ENCODE measurements at regions of chr6 and their contacts with region 1.

Region 1: GRCh38 chr6:150417899-150418826 is 49.4 kb downstream of the IYD start:
- DNase-seq: peak; percentile 80
- ATAC-seq: peak; percentile 89
- H3K4me3 ChIP-seq: peak overlapping the region; percentile 16 to 30; a peak in 3 of 4 replicates
- H3K27ac ChIP-seq: peak overlapping the region; percentile 44; the same call in 1 of the 2 replicates
- H3K4me1 ChIP-seq: peaks cover 8% of the 10 kb centered on the region; the same call in 1 of the 2 replicates
- H3K27me3 ChIP-seq: no peaks in the 10 kb centered on the region
- CTCF ChIP-seq: peak; percentile 76

Region 2: GRCh38 chr6:149963462-149964307 is 454.5 kb before region 1 on chr6 and contains the start of gene ULBP1:
- CTCF ChIA-PET with region 1: no interaction called
- POLR2A ChIA-PET with region 1: no interaction called
- in situ Hi-C with region 1: no loop called
- intact Hi-C with region 1: no loop called
- DNase-seq: peak; percentile 5
- ATAC-seq: peak; percentile 92
- H3K4me3 ChIP-seq: peak within 1 kb of the TSS; percentile 48 to 62
- H3K27ac ChIP-seq: peak within 1 kb of the TSS; percentile 71
- H3K4me1 ChIP-seq: peaks cover 7% of the 10 kb centered on the region
- H3K27me3 ChIP-seq: no peaks in the 10 kb centered on the region
- CTCF ChIP-seq: no peak
- total RNA-seq, gene ULBP1: 3.1 TPM

Region 3: GRCh38 chr6:150600301-150601017 is 182.3 kb after region 1 on chr6:
- CTCF ChIA-PET with region 1: interaction called, 3 read pairs
- POLR2A ChIA-PET with region 1: no interaction called
- in situ Hi-C with region 1: no loop called
- intact Hi-C with region 1: loop called (anchors 2 kb)
- DNase-seq: peak; percentile 8
- ATAC-seq: peak; percentile 92
- H3K4me3 ChIP-seq: peak overlapping the region; percentile 42 to 54
- H3K27ac ChIP-seq: 0 out of 2 replicates have a peak overlapping the region, but pooled peaks have one; percentile 10
- H3K4me1 ChIP-seq: peaks cover 3% of the 10 kb centered on the region; the same call in 1 of the 2 replicates
- H3K27me3 ChIP-seq: peaks cover 40% of the 10 kb centered on the region
- CTCF ChIP-seq: peak; percentile 75

Region 4: DNA sequence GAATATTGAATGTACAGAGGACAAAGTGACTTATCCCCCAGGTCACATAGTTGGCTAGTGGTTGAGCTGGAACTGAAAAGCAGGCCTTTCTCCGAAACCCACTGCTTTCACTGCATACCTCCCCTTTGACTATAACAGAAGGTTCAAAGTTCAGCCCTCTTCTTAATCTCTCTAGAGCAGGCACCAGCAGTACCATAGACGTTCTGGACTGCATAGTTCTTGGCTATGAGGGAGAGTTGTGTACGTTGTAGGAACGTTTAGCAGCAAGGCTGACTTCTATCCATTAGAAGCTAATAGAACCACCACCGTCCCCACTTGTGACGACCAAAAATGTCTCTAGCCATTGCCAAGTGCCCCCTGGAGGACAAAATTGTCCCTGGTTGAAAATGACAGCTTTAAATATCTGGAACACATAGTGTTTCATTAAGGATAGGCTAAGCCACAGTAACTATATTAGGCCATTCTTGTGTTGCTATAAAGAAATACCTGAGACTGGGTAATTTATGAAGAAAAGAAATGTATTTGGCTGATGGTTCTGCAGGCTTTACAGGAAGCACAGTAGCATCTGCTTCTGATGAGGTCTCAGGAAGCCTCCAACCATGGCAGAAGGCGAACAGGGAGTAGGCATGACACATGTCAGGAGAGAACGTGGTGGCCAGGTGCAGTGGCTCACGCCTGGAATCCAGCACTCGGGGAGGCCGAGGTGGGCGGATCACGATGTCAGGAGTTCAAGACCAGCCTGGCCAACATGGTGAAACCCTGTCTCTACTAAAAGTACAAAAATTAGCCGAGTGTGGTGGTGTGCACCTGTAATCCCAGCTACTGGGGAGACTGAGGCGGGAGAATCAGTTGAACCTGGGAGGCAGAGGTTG is 323.7 kb after region 1 on chr6:
- CTCF ChIA-PET with region 1: no interaction called
- POLR2A ChIA-PET with region 1: no interaction called
- in situ Hi-C with region 1: no loop called
- intact Hi-C with region 1: loop called (anchors 5 kb)
- DNase-seq: no peak
- ATAC-seq: no peak
- H3K4me3 ChIP-seq: no peak overlapping the region
- H3K27ac ChIP-seq: no peak overlapping the region
- H3K4me1 ChIP-seq: no peaks in the 10 kb centered on the region
- H3K27me3 ChIP-seq: no peaks in the 10 kb centered on the region
- CTCF ChIP-seq: peak; percentile 56

Region 5: DNA sequence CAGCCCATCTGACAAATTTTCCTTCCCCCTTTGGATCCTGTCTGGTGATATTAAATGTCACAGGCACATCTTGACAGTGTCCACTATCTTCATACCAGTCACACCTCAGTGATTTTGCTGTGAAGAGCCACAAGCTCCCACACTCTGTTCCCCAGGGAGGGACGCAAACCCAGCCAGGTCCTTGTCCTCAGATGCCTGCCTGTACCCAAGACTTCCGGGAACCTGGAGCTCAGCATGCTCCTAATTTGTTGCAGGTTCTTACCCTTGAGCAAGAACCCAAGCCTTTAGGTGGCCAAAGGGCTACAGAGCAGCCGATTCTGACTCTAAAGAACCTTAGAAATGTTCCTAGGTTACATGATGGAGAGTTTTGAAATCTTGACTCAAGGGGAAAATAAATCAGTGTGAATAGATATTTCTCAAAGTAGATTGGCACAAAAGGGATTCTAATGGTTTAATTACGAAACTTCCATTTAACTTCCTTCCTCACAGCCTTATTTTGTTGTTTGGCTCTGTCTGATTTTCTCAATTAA is 381.2 kb after region 1 on chr6:
- CTCF ChIA-PET with region 1: no interaction called
- POLR2A ChIA-PET with region 1: no interaction called
- in situ Hi-C with region 1: no loop called
- intact Hi-C with region 1: loop called (anchors 5 kb)
- DNase-seq: no peak
- ATAC-seq: no peak
- H3K4me3 ChIP-seq: no peak overlapping the region
- H3K27ac ChIP-seq: no peak overlapping the region
- H3K4me1 ChIP-seq: no peaks in the 10 kb centered on the region
- H3K27me3 ChIP-seq: no peaks in the 10 kb centered on the region
- CTCF ChIP-seq: no peak

Region 6: GRCh38 chr6:150813319-150813992 is 395.3 kb after region 1 on chr6:
- CTCF ChIA-PET with region 1: interaction called, 13 read pairs
- POLR2A ChIA-PET with region 1: interaction called, 3 read pairs
- in situ Hi-C with region 1: no loop called
- intact Hi-C with region 1: loop called (anchors 1 kb)
- DNase-seq: no peak
- ATAC-seq: no peak
- H3K4me3 ChIP-seq: no peak overlapping the region
- H3K27ac ChIP-seq: no peak overlapping the region
- H3K4me1 ChIP-seq: peaks cover 11% of the 10 kb centered on the region
- H3K27me3 ChIP-seq: no peaks in the 10 kb centered on the region
- CTCF ChIP-seq: no peak